ENCODE measurements at regions of chr11 and their contacts with region 1.

Region 1: DNA sequence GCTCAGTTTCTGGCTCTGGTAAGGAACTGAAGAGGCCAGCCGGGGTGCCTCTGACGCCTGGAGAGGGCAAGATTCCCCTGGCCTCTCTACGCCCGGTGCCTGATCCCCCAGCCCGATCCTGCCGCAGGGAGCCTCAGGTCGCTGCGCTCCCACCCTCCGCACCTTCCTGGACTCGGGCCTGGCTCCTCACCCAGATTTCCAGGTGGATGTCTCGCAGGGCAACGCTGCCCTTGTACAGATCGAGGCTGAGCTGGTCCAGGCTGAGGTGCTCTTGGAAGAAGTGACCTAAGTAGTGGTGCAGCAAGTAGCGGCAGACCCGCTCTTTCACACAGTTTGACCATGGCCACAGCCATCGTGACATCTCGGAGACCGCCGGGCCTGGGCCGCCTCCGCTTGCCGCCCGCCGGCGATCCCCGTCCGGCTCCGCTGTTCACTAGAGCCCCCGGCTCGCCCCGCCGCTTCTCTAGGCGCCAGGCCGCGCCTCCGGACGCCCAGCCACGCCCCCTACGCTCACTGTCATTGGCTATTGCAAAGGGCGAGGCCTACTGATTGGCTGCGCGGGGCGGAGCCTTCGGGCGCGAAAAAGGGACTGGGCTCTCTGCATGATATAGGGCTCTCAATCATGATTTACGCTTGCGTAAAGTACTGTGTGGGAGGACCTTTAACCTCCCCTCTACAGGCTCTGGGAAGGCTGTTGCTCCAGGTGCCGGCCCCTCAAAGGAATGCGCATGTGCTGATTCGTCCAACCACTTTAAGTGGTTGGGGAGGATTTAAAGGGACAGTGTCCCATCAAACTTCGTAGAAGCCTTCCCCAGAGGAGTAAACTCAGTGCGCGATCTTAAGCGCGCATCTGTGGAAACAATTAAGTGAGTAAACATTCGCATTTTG is at the start of gene ATG2A:
- DNase-seq: peak; percentile 99
- ATAC-seq: peak; percentile 98
- H3K4me3 ChIP-seq: peak within 1 kb of the TSS; percentile 86
- H3K27ac ChIP-seq: peak within 1 kb of the TSS; percentile 91
- H3K4me1 ChIP-seq: peaks cover 6% of the 10 kb centered on the region
- H3K27me3 ChIP-seq: no peaks in the 10 kb centered on the region
- CTCF ChIP-seq: no peak
- EP300 ChIP-seq: no peak
- POLR2A ChIP-seq: peak; percentile 86
- RAD21 ChIP-seq: no peak
- polyA plus RNA-seq, gene ATG2A: 0.08 to 0.51 TPM

Region 2: GRCh38 chr11:64566042-64566914 is 350.7 kb before region 1 on chr11:
- CTCF ChIA-PET with region 1: no interaction called
- POLR2A ChIA-PET with region 1: no interaction called
- RAD21 ChIA-PET with region 1: no interaction called
- SMC1A ChIA-PET with region 1: no interaction called
- in situ Hi-C with region 1: no loop called
- intact Hi-C with region 1: no loop called
- DNase-seq: no peak
- ATAC-seq: no peak
- H3K4me3 ChIP-seq: no peak overlapping the region
- H3K27ac ChIP-seq: no peak overlapping the region
- H3K4me1 ChIP-seq: no peaks in the 10 kb centered on the region
- H3K27me3 ChIP-seq: no peaks in the 10 kb centered on the region
- CTCF ChIP-seq: no peak
- EP300 ChIP-seq: no peak
- POLR2A ChIP-seq: no peak
- RAD21 ChIP-seq: no peak

Region 3: GRCh38 chr11:64996710-64997380 is 79.8 kb after region 1 on chr11 and contains the start of gene BATF2:
- CTCF ChIA-PET with region 1: interaction called, 9 read pairs
- POLR2A ChIA-PET with region 1: interaction called, 4 read pairs
- RAD21 ChIA-PET with region 1: no interaction called
- SMC1A ChIA-PET with region 1: interaction called, 19 read pairs
- in situ Hi-C with region 1: no loop called
- intact Hi-C with region 1: no loop called
- DNase-seq: no peak
- ATAC-seq: peak; percentile 87
- H3K4me3 ChIP-seq: peak within 1 kb of the TSS; percentile 28; the same call in 1 of the 2 replicates
- H3K27ac ChIP-seq: no peak within 1 kb of the TSS
- H3K4me1 ChIP-seq: peaks cover 8% of the 10 kb centered on the region
- H3K27me3 ChIP-seq: no peaks in the 10 kb centered on the region; a peak in 1 of 4 replicates
- CTCF ChIP-seq: peak; percentile 35 to 48 (median 41); a peak in 5 of 6 replicates
- EP300 ChIP-seq: no peak
- POLR2A ChIP-seq: no peak
- RAD21 ChIP-seq: peak; percentile 52
- polyA plus RNA-seq, gene BATF2: 0.18 to 0.24 TPM

Measured in GM12878 (cell line).